Right ventricle myocardium inferior (tissue), 1 donor: ENCODE measurements at regions of chr1 and their contacts with region 1.

Region 1: GRCh38 chr1:178931858-178932551 is 61.1 kb upstream of the ANGPTL1 start:
- DNase-seq: peak; percentile 88
- ATAC-seq: peak; percentile 89

Region 2: GRCh38 chr1:178300352-178300699 is 631.7 kb before region 1 on chr1:
- intact Hi-C with region 1: loop called (anchors 5 kb)
- DNase-seq: no peak
- ATAC-seq: no peak

Region 3: GRCh38 chr1:178802873-178803272 is 129.1 kb before region 1 on chr1:
- intact Hi-C with region 1: no loop called
- DNase-seq: no peak
- ATAC-seq: no peak

Region 4: GRCh38 chr1:178870944-178871343 is 61.1 kb before region 1 on chr1 and contains the start of gene ANGPTL1:
- intact Hi-C with region 1: loop called (anchors 2 kb)
- DNase-seq: no peak
- ATAC-seq: peak; percentile 70
- total RNA-seq, gene ANGPTL1: 11.5 TPM

Region 5: DNA sequence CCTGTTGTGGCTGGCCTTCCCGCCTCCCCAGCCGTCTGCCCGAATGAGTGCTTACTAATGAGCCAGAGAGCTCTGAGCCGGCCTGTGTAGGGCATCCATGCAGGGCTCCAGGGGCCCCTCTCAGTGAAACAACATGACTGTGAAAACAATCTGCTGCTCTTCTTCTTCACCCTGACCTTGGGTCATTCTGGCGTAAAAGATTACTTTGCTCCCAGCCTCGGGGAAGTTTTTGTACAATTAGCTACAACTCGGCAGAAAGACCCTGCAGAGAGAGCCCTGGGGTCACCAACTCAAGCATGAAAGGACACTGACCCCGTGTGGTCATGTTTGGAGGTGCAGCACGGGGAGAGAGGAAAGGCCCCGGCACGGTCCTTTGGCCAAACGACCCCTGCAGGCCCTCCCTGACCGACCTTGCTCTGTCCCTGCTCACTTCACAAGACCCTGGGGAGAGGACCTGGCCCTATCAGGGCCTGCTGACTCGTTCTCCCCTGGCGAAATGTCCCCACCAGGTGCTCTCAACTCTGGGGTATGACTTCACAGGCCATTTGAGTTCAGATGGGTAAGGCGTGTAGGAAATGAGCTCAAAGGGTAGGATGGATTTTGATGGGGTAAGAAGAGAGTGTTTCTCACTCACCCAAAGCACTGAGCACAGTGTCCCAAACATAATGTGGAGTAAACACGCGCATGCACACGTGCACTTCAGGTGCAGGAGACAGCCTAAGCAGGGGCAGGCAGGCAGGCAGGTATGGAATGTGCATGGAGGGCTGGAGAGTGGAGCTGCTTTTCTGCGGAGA is 70.7 kb after region 1 on chr1:
- intact Hi-C with region 1: no loop called
- DNase-seq: peak; percentile 84
- ATAC-seq: peak; percentile 84

Region 6: DNA sequence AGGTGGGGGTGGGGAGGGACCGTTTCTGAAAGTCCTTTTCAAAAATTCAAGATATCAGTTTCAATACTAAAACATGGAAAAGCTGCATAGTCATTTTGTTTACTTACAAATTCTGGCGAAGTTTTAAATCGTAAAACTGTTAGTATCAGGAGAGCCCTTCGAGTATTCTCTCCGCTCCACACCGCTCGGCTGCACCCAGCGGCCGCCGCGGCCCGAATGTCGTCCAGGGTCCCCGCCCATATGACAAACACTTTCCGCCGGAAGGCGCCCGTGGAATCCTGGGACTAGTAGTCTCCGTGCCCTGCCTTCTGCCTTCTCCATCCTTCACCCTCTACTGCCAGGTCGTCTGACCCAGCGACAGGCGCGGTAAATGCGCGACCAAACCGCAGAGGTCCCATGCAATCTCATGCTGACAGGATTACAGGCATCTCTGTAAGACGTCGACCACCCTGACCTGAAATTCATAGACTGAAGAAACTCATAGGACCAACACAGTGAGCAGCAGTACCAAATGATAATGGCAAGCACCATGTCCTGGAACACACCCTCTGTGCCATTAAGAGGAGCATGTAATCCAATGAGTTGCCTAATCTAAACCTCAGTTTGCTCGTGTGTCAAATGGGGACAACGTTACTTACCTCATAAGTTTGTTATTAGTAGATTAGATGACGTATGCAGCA is 945.7 kb after region 1 on chr1 and contains the start of gene TOR1AIP2:
- intact Hi-C with region 1: no loop called
- DNase-seq: peak; percentile 98
- ATAC-seq: peak; percentile 70
- total RNA-seq, gene TOR1AIP2: 48.8 TPM